Left cardiac atrium (tissue), 4 donors: ENCODE measurements at regions of chr14 and their contacts with region 1.

Region 1: DNA sequence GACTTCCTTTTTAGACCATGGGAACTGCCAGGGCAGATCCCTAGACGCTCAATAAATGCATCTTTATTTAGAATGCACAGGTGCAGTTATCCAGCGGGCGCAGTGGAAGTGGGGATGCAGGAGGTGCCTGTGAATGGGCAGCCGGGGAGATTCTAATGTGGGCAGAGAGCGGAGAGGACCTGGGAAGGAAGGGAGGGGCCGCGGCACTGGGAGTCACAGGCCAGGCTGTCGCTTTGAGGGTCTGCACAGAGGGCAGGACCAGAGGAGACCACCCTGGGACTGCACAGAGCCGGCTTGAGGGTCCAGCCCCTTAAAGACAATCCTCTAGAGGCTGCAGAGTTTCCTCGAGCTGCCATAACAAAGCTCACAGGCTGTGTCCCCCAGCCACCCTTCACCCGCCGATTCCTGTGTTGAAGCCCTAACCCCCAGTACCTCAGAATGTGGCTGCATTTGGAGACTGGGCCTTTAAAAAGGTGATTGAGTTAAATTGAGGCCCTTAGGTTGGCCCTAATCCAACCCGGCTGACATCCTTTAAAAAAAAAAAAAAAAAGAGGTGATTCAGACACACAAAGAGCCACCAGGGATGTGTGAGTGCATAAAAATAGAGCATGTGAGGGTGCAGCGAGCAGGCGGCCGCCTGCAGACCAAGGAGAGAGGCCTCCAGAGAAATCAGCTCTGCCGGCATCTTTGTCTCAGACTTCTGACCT is 44.4 kb upstream of the PPP2R5C start:
- DNase-seq: no peak
- ATAC-seq: no peak

Region 2: DNA sequence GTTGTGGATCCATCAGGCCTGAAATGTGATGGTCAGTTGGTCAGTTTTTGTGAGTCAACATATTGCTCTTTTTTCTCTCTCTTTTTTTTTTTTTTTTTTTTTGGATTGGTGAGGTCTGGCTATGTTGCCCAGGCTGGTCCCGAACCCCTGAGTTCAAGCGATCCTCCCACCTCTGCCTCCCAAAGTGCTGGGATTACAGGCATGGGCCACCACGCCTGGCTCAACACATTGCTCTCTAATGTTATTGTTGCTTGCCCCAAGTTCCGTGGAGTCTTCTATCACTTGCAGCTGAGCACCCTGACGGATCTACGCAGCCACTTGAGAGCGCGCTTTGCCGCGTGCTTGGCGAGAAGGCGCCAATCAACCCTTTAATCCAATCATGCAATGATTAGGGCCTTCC is 225.3 kb before region 1 on chr14:
- intact Hi-C with region 1: no loop called
- DNase-seq: no peak
- ATAC-seq: no peak

Region 3: GRCh38 chr14:101761032-101761880 is 44.1 kb after region 1 on chr14 and contains the start of gene PPP2R5C:
- intact Hi-C with region 1: loop called in 1 of 2 experiments (anchors 5 kb)
- DNase-seq: peak; percentile 95
- ATAC-seq: peak; percentile 92
- total RNA-seq, gene PPP2R5C: 126 to 142 TPM

Region 4: DNA sequence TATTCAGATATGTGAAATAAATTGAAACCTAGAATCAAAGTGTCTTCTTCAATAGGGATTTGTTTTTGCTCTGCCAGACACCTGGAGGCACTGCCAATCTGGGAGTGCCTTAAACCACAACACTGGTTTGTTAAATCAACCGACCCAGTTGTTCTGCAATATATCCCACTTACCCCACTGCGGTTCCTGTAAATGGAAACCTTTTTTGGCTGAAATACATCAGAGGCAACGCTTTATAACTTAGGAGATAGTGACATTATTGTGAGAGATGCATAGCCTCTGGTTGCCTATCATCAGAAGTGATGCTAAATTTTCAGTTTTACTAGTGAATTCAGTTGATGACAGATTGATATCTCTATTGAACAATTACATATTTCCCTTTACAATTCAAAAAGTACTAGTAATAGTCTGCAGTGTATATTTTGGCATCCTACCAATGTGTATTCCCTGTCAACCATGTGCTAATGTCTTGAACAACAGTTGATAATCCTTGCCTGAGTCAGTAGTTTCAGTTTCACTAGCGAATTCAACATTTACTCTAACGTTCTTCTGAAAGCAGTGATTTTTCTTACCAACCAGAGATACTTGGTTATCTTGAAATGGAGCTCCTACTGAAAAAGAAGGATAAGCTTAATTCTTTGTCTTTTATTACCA is 74.9 kb after region 1 on chr14:
- intact Hi-C with region 1: no loop called
- DNase-seq: no peak
- ATAC-seq: peak; percentile 71 to 77